GM12878 (cell line): ENCODE measurements at regions of chr7 and their contacts with region 1.

Region 1: DNA sequence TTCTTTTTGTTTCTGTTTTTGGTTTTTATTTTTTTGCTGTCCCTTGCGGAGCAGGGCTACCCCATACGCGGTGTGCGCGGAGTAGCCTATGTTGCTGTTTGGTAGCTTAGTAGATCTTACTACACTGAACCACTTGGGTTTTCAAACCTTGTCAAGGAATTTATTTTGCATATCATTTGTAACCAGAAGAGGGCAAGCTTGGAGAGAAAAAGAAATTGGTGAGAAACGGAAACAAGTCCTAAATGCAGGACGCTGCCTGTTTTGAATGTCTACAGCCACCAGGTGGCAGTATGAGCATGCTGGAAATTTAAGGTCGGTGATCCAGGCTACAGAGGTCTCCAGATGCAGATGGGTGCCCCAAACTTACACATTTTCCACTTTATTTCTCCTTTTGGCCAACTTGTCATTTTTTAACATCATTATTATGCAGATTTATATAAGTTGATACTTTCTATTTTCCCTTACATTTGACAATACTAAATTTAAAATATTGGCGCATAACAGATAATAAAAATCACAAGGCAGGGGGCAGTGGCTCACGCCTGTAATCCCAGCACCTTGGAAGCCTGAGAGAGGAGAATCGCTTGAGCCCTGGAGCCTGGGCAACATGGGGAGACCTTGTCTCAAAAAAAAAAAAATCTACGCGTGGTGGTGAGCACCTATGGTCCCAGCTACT is 15.3 kb upstream of the TRA2A start:
- DNase-seq: peak; percentile 74
- ATAC-seq: peak; percentile 79
- H3K4me3 ChIP-seq: no peak overlapping the region
- H3K27ac ChIP-seq: peak overlapping the region; percentile 18; the same call in 1 of the 2 replicates
- H3K4me1 ChIP-seq: peaks cover 13% of the 10 kb centered on the region
- H3K27me3 ChIP-seq: no peaks in the 10 kb centered on the region
- CTCF ChIP-seq: peak; percentile 83 to 95 (median 93); a peak in 5 of 6 replicates
- EP300 ChIP-seq: no peak
- POLR2A ChIP-seq: no peak
- RAD21 ChIP-seq: peak; percentile 89

Region 2: GRCh38 chr7:23520582-23520981 is 26.5 kb before region 1 on chr7:
- CTCF ChIA-PET with region 1: interaction called, 27 read pairs
- POLR2A ChIA-PET with region 1: no interaction called
- RAD21 ChIA-PET with region 1: interaction called, 11 read pairs
- SMC1A ChIA-PET with region 1: interaction called, 11 read pairs
- in situ Hi-C with region 1: no loop called
- intact Hi-C with region 1: no loop called
- DNase-seq: no peak
- ATAC-seq: no peak
- H3K4me3 ChIP-seq: no peak overlapping the region
- H3K27ac ChIP-seq: no peak overlapping the region
- H3K4me1 ChIP-seq: peaks cover 5% of the 10 kb centered on the region
- H3K27me3 ChIP-seq: no peaks in the 10 kb centered on the region
- CTCF ChIP-seq: no peak
- EP300 ChIP-seq: no peak
- POLR2A ChIP-seq: no peak
- RAD21 ChIP-seq: 0 out of 2 replicates have a peak, but pooled peaks have one; percentile 12

Region 3: GRCh38 chr7:23531794-23532489 is 15.1 kb before region 1 on chr7 and contains the start of gene TRA2A:
- CTCF ChIA-PET with region 1: interaction called, 5 read pairs
- POLR2A ChIA-PET with region 1: interaction called, 5 read pairs
- RAD21 ChIA-PET with region 1: interaction called, 3 read pairs
- SMC1A ChIA-PET with region 1: interaction called, 13 read pairs
- in situ Hi-C with region 1: no loop called
- intact Hi-C with region 1: no loop called
- DNase-seq: peak; percentile 86
- ATAC-seq: peak; percentile 84
- H3K4me3 ChIP-seq: peak within 1 kb of the TSS; percentile 99
- H3K27ac ChIP-seq: peak within 1 kb of the TSS; percentile 99
- H3K4me1 ChIP-seq: 0 out of 2 replicates have a peak, but pooled peaks cover 2% of the 10 kb centered on the region
- H3K27me3 ChIP-seq: no peaks in the 10 kb centered on the region
- CTCF ChIP-seq: no peak
- EP300 ChIP-seq: 0 out of 4 replicates have a peak, but pooled peaks of 1 of the 2 experiments have one; percentile 22
- POLR2A ChIP-seq: peak; percentile 98
- RAD21 ChIP-seq: no peak
- polyA plus RNA-seq, gene TRA2A: 69.2 to 83.1 TPM

Region 4: DNA sequence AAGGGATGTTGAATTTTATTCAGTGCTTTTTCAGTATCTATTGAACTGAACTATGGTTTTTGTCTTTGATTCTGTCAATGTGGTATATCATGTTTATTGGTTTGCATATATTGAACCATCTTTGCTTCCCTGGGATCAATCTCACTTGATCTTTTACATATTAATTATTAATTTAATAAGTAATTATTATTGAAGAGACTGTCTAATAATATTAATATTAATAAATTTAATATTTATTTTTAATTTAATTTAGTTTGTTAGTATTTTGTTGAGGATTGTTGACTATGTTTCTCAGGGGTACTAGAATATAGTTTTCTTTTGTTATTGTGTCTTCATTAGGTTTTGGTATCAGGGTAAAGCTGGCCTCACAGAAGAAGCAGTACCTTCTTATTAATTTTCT is 11.3 kb after region 1 on chr7:
- CTCF ChIA-PET with region 1: interaction called, 14 read pairs
- POLR2A ChIA-PET with region 1: no interaction called
- RAD21 ChIA-PET with region 1: no interaction called
- SMC1A ChIA-PET with region 1: interaction called, 3 read pairs
- in situ Hi-C with region 1: no loop called
- intact Hi-C with region 1: no loop called
- DNase-seq: no peak
- ATAC-seq: no peak
- H3K4me3 ChIP-seq: no peak overlapping the region
- H3K27ac ChIP-seq: no peak overlapping the region
- H3K4me1 ChIP-seq: no peaks in the 10 kb centered on the region
- H3K27me3 ChIP-seq: no peaks in the 10 kb centered on the region; a peak in 1 of 4 replicates
- CTCF ChIP-seq: no peak
- EP300 ChIP-seq: no peak
- POLR2A ChIP-seq: no peak
- RAD21 ChIP-seq: no peak

Region 5: GRCh38 chr7:23597094-23598091 is 50.4 kb after region 1 on chr7 and contains the start of gene CCDC126:
- CTCF ChIA-PET with region 1: interaction called, 4 read pairs
- POLR2A ChIA-PET with region 1: interaction called, 5 read pairs
- RAD21 ChIA-PET with region 1: no interaction called
- SMC1A ChIA-PET with region 1: interaction called, 4 read pairs
- in situ Hi-C with region 1: no loop called
- intact Hi-C with region 1: loop called (anchors 2 kb)
- DNase-seq: peak; percentile 57
- ATAC-seq: peak; percentile 77
- H3K4me3 ChIP-seq: peak within 1 kb of the TSS; percentile 76
- H3K27ac ChIP-seq: peak within 1 kb of the TSS; percentile 92
- H3K4me1 ChIP-seq: peaks cover 32% of the 10 kb centered on the region
- H3K27me3 ChIP-seq: no peaks in the 10 kb centered on the region
- CTCF ChIP-seq: no peak
- EP300 ChIP-seq: no peak
- POLR2A ChIP-seq: peak; percentile 74
- RAD21 ChIP-seq: no peak
- polyA plus RNA-seq, gene CCDC126: 34.3 to 49.9 TPM

Region 6: GRCh38 chr7:23679898-23680413 is 132.9 kb after region 1 on chr7 and contains the start of gene FAM221A:
- CTCF ChIA-PET with region 1: interaction called, 10 read pairs
- POLR2A ChIA-PET with region 1: interaction called, 4 read pairs
- RAD21 ChIA-PET with region 1: no interaction called
- SMC1A ChIA-PET with region 1: no interaction called
- in situ Hi-C with region 1: no loop called
- intact Hi-C with region 1: no loop called
- DNase-seq: peak; percentile 36
- ATAC-seq: peak; percentile 98
- H3K4me3 ChIP-seq: peak within 1 kb of the TSS; percentile 84
- H3K27ac ChIP-seq: peak within 1 kb of the TSS; percentile 22
- H3K4me1 ChIP-seq: no peaks in the 10 kb centered on the region; the same call in 1 of the 2 replicates
- H3K27me3 ChIP-seq: no peaks in the 10 kb centered on the region
- CTCF ChIP-seq: peak; percentile 65 to 85 (median 70)
- EP300 ChIP-seq: no peak
- POLR2A ChIP-seq: peak; percentile 58
- RAD21 ChIP-seq: no peak
- polyA plus RNA-seq, gene FAM221A: 9.8 to 16.7 TPM

Region 7: GRCh38 chr7:23712368-23713284 is 165.6 kb after region 1 on chr7:
- CTCF ChIA-PET with region 1: interaction called, 70 read pairs
- POLR2A ChIA-PET with region 1: interaction called, 7 read pairs
- RAD21 ChIA-PET with region 1: interaction called, 9 read pairs
- SMC1A ChIA-PET with region 1: interaction called, 25 read pairs
- in situ Hi-C with region 1: no loop called
- intact Hi-C with region 1: loop called (anchors 1 kb)
- DNase-seq: peak; percentile 3
- ATAC-seq: peak; percentile 62
- H3K4me3 ChIP-seq: no peak overlapping the region
- H3K27ac ChIP-seq: no peak overlapping the region
- H3K4me1 ChIP-seq: no peaks in the 10 kb centered on the region
- H3K27me3 ChIP-seq: no peaks in the 10 kb centered on the region
- CTCF ChIP-seq: peak; percentile 22 to 70 (median 27); a peak in 4 of 6 replicates
- EP300 ChIP-seq: no peak
- POLR2A ChIP-seq: no peak
- RAD21 ChIP-seq: peak; percentile 98